ENCODE measurements at regions of chr14 and their contacts with region 1.

Region 1: DNA sequence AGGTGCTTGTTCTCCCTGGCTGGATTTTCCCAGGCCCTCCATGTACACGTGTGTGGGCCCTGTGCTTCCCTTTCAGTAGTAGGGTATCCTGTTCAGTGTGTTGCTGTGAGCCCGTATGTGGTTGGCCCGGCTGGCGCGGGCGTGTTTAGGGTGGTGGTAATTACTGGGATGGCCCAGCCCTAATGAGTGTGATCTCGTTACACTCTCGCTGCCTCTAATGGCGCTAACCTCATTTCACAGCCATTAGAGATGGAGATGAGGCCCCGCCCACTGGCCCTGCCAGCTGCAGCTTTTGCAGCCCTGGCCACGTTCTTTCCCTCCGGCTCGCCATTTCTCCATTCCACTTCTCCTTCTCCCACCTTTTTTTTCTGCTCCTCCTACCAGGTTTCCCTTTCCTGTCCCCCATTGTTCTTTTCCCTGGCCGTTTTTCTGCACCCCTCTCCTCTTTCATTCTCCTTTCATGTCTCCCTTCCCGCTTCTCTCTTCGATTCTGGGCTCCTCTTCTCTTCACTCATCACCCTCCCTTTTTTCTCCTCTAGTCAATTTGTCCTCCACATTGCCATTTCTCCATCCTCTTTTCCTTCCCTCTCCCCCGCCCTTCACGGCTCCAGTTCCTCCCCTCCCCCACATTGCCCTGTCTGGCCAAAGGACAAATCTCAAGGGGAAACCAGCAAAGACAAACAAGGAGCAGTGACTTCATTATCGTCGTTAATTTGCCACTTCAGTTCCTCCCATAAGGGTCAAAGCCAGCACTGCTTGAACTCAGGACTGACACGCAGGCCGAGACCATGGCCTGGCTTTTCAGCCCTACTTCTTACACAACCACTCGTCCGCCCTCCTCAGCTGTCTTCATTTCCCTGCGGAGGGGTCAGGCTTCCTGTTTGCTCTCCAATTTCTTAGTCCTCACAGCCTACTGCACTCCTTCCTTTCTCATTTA is 6.8 kb downstream of the ZFHX2 start:
- DNase-seq: peak in 1 of 2 donors; percentile 70
- ATAC-seq: peak; percentile 78
- H3K4me3 ChIP-seq: no peak overlapping the region
- H3K27ac ChIP-seq: no peak overlapping the region
- H3K4me1 ChIP-seq: no peaks in the 10 kb centered on the region
- H3K27me3 ChIP-seq: no peaks in the 10 kb centered on the region

Region 2: GRCh38 chr14:23275412-23275811 is 269.4 kb before region 1 on chr14:
- intact Hi-C with region 1: no loop called
- DNase-seq: no peak
- ATAC-seq: no peak
- H3K4me3 ChIP-seq: no peak overlapping the region
- H3K27ac ChIP-seq: no peak overlapping the region
- H3K4me1 ChIP-seq: no peaks in the 10 kb centered on the region
- H3K27me3 ChIP-seq: no peaks in the 10 kb centered on the region

Region 3: GRCh38 chr14:23483236-23483854 is 61.4 kb before region 1 on chr14:
- intact Hi-C with region 1: loop called in 1 of 2 experiments (anchors 5 kb)
- DNase-seq: no peak
- ATAC-seq: no peak
- H3K4me3 ChIP-seq: no peak overlapping the region
- H3K27ac ChIP-seq: no peak overlapping the region
- H3K4me1 ChIP-seq: no peaks in the 10 kb centered on the region
- H3K27me3 ChIP-seq: no peaks in the 10 kb centered on the region

Measured in aorta (tissue), 5 donors.